Activated naive CD8-positive, alpha-beta T cell treated with anti-CD3 and anti-CD28 coated beads, Interleukin-2, amount 10 ng/mL, durations not matched to agents 7 days and 5 days (primary cell): ENCODE measurements at regions of chr1 and their contacts with region 1.

Region 1: DNA sequence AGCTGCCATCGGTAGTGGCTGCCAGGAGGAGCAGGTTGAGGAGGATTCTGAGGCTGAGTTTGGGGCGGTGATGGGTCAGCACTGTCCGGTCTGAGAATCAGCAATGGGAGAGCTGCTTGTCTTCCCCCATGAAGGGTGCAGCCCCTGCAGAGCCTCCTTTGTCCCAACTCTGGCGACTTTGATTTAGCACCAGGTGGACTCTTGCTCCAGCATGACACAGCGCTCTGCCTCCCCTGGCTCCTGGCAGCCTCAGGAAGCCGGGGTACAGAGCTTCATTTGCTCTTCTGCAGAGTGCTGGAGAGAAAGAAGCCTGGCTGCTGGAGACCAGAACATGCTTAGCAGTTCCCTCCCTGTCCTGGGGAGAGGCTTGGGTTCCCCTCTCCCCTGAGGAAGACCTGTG is 13.3 kb downstream of the ZDHHC18 start:
- DNase-seq: no peak
- ATAC-seq: no peak
- H3K4me3 Mint-ChIP-seq: no peak overlapping the region
- H3K27ac Mint-ChIP-seq: no peak overlapping the region
- H3K4me1 Mint-ChIP-seq: peaks cover 4% of the 10 kb centered on the region
- H3K27me3 Mint-ChIP-seq: no peaks in the 10 kb centered on the region

Region 2: GRCh38 chr1:26814377-26814776 is 25.4 kb before region 1 on chr1:
- POLR2A ChIA-PET with region 1: no interaction called
- DNase-seq: no peak
- ATAC-seq: no peak
- H3K4me3 Mint-ChIP-seq: no peak overlapping the region
- H3K27ac Mint-ChIP-seq: no peak overlapping the region
- H3K4me1 Mint-ChIP-seq: peaks cover 15% of the 10 kb centered on the region
- H3K27me3 Mint-ChIP-seq: no peaks in the 10 kb centered on the region

Region 3: GRCh38 chr1:26921540-26922430 is 82.0 kb after region 1 on chr1 and contains the start of gene NUDC:
- POLR2A ChIA-PET with region 1: no interaction called
- DNase-seq: peak; percentile 96
- ATAC-seq: peak; percentile 97
- H3K4me3 Mint-ChIP-seq: peak within 1 kb of the TSS; percentile 91
- H3K27ac Mint-ChIP-seq: peak within 1 kb of the TSS; percentile 91
- H3K4me1 Mint-ChIP-seq: peaks cover 24% of the 10 kb centered on the region
- H3K27me3 Mint-ChIP-seq: no peaks in the 10 kb centered on the region
- total RNA-seq, gene NUDC: 59.0 to 59.1 TPM

Region 4: DNA sequence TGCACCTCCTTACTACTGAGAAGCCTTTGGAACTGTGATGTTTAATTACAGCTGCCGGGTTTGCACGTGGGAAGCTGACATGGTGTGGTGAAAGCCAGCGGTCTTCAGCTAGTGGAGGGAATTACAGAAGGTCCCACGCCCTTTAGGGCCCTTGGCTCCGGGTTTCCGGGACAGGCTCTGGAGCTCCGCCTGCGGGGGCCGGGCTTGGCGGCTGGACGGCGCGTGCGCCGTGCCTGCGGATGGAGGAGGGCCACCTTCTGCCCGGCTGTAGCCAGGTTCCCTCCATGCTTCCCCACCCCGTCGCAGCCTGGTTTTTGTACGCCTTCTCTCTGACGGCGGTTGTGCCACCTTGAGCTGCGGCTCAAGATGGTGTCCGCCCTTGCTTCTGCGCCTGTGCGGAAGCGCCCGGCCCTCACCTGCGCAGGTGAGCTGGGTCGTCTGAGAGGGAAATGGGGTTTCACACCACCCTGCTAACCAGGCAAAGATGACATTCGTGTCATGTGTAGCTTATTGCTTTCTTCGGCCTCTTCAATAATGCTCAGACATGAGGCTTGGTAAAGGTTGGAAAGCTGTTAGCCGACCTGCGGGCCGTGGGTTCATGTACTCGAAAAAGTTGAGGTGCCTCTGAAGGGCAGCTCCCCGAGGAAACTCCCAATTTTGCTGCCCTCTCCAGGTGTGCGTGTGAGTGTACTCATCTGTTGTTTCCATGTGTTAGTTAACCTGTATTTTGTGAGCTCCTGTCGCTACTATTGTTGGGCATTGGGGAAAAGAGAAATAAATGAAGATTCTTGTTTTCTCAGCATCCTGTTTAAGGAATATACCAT is 1935.6 kb after region 1 on chr1:
- POLR2A ChIA-PET with region 1: interaction called, 15 read pairs
- DNase-seq: peak; percentile 78
- ATAC-seq: peak; percentile 94
- H3K4me3 Mint-ChIP-seq: peak overlapping the region; percentile 84
- H3K27ac Mint-ChIP-seq: peak overlapping the region; percentile 54
- H3K4me1 Mint-ChIP-seq: peaks cover 3% of the 10 kb centered on the region
- H3K27me3 Mint-ChIP-seq: peaks cover 5% of the 10 kb centered on the region